ENCODE measurements at regions of chr17 and their contacts with region 1.

Region 1: GRCh38 chr17:36629252-36629847 is 28.0 kb downstream of the MRM1 start:
- DNase-seq: peak; percentile 51
- ATAC-seq: peak; percentile 97
- H3K4me3 ChIP-seq: no peak overlapping the region
- H3K27ac ChIP-seq: no peak overlapping the region
- H3K4me1 ChIP-seq: peaks cover 2% of the 10 kb centered on the region; the same call in 1 of the 2 replicates
- H3K27me3 ChIP-seq: peaks cover 45% of the 10 kb centered on the region
- CTCF ChIP-seq: peak; percentile 98
- POLR2A ChIP-seq: no peak
- RAD21 ChIP-seq: peak; percentile 94

Region 2: DNA sequence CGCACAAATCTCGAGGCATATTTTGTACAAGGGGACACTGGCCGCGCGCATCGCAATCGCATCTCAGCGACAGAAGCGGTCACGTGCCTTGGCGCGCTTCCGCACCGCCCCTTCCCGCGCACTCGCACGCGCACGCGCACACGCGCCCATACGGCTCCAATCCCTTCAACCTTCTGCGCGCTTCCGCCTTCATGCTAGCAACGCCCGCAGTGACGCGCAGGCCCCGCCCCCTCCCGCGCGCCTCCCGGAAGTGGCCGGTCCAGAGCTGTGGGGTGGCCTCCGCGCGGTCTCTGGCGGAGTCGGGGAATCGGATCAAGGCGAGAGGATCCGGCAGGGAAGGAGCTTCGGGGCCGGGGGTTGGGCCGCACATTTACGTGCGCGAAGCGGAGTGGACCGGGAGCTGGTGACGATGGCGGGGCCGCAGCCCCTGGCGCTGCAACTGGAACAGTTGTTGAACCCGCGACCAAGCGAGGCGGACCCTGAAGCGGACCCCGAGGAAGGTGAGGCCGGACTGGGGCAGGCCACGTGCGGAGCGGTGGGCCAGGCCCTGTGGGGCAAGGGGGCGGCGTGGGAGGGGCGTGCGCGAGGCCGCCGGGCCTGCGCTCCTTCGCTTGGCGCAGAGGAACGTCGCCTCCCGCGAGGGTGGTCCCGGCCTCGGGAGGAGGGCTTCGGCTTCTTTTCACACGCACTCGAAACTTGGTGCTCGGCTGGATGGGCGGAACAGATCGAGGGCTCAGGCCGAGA is 319.5 kb after region 1 on chr17 and contains the start of gene AATF:
- CTCF ChIA-PET with region 1: no interaction called
- POLR2A ChIA-PET with region 1: no interaction called
- dilution Hi-C with region 1: no loop called
- in situ Hi-C with region 1: no loop called
- intact Hi-C with region 1: loop called (anchors 10 kb)
- DNase-seq: peak; percentile 94
- ATAC-seq: peak; percentile 97
- H3K4me3 ChIP-seq: peak within 1 kb of the TSS; percentile 55
- H3K27ac ChIP-seq: peak within 1 kb of the TSS; percentile 78
- H3K4me1 ChIP-seq: peaks cover 3% of the 10 kb centered on the region
- H3K27me3 ChIP-seq: peaks cover 37% of the 10 kb centered on the region
- CTCF ChIP-seq: no peak
- POLR2A ChIP-seq: peak; percentile 86
- RAD21 ChIP-seq: no peak
- total RNA-seq, gene AATF: 34.8 and 37.2 TPM in 2 replicates

Region 3: DNA sequence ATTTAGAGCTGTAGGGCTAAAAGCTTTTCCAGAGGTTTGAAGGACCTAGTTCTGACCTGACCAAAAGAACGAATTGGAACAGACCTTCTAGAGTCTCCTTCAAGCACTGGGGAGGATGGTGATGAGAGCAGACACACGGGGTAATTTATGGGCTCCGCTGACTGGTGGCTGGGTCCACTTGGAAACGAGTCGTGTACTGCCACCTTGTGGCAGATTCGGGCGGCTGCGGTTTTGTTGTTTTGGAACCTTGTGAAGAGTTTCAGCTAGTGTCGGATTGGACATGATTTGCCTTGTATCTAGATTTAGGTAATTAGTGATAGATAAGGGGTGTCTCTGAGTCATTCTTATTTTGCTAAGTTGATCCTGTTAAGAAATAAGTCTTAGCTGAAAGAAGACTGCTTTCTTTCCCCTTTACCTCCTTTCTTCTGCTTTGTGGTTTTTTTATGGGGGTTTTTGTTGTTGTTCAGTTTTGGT is 418.3 kb after region 1 on chr17:
- CTCF ChIA-PET with region 1: interaction called, 9 read pairs
- POLR2A ChIA-PET with region 1: no interaction called
- dilution Hi-C with region 1: loop called (anchors 25 kb)
- in situ Hi-C with region 1: loop called (anchors 5 kb)
- intact Hi-C with region 1: loop called (anchors 1 kb)
- DNase-seq: peak; percentile 80
- ATAC-seq: peak; percentile 86
- H3K4me3 ChIP-seq: no peak overlapping the region
- H3K27ac ChIP-seq: no peak overlapping the region
- H3K4me1 ChIP-seq: peaks cover 2% of the 10 kb centered on the region
- H3K27me3 ChIP-seq: no peaks in the 10 kb centered on the region
- CTCF ChIP-seq: peak; percentile 88
- POLR2A ChIP-seq: no peak
- RAD21 ChIP-seq: peak; percentile 86

Region 4: GRCh38 chr17:37067555-37068111 is 438.3 kb after region 1 on chr17:
- CTCF ChIA-PET with region 1: no interaction called
- POLR2A ChIA-PET with region 1: no interaction called
- dilution Hi-C with region 1: loop called (anchors 25 kb)
- in situ Hi-C with region 1: no loop called
- intact Hi-C with region 1: no loop called
- DNase-seq: peak; percentile 83
- ATAC-seq: peak; percentile 93
- H3K4me3 ChIP-seq: no peak overlapping the region
- H3K27ac ChIP-seq: no peak overlapping the region
- H3K4me1 ChIP-seq: peaks cover 3% of the 10 kb centered on the region
- H3K27me3 ChIP-seq: peaks cover 34% of the 10 kb centered on the region
- CTCF ChIP-seq: no peak
- POLR2A ChIP-seq: no peak
- RAD21 ChIP-seq: no peak

Region 5: DNA sequence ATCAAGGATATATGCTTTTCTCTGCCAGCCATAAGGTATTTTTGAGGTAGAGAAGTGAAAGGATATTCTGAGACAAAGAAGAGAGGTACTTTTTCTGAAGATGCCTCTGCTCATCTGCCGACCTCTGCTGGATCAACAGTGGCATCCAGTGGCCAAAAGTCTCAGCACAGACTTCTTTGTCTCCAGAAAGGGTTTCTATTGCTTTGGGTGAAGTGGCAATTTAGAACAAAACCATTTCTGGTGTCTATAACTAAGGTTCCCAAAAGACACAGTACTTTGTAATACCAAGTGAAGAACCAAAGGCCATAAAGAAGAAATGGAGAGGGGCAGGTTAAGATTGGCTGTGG is 591.2 kb after region 1 on chr17:
- CTCF ChIA-PET with region 1: no interaction called
- POLR2A ChIA-PET with region 1: no interaction called
- dilution Hi-C with region 1: no loop called
- in situ Hi-C with region 1: no loop called
- intact Hi-C with region 1: loop called (anchors 1 kb)
- DNase-seq: peak; percentile 54
- ATAC-seq: peak; percentile 88
- H3K4me3 ChIP-seq: no peak overlapping the region
- H3K27ac ChIP-seq: no peak overlapping the region
- H3K4me1 ChIP-seq: no peaks in the 10 kb centered on the region; the same call in 1 of the 2 replicates
- H3K27me3 ChIP-seq: no peaks in the 10 kb centered on the region
- CTCF ChIP-seq: peak; percentile 67
- POLR2A ChIP-seq: no peak
- RAD21 ChIP-seq: peak; percentile 81

Region 6: GRCh38 chr17:37239690-37240334 is 610.5 kb after region 1 on chr17:
- CTCF ChIA-PET with region 1: interaction called, 4 read pairs
- POLR2A ChIA-PET with region 1: no interaction called
- dilution Hi-C with region 1: no loop called
- in situ Hi-C with region 1: loop called (anchors 10 kb)
- intact Hi-C with region 1: loop called (anchors 1 kb)
- DNase-seq: peak; percentile 72
- ATAC-seq: peak; percentile 86
- H3K4me3 ChIP-seq: no peak overlapping the region
- H3K27ac ChIP-seq: no peak overlapping the region
- H3K4me1 ChIP-seq: peaks cover 2% of the 10 kb centered on the region; the same call in 1 of the 2 replicates
- H3K27me3 ChIP-seq: no peaks in the 10 kb centered on the region
- CTCF ChIP-seq: peak; percentile 75
- POLR2A ChIP-seq: no peak
- RAD21 ChIP-seq: peak; percentile 67